ENCODE measurements at regions of chr15 and their contacts with region 1.

Region 1: DNA sequence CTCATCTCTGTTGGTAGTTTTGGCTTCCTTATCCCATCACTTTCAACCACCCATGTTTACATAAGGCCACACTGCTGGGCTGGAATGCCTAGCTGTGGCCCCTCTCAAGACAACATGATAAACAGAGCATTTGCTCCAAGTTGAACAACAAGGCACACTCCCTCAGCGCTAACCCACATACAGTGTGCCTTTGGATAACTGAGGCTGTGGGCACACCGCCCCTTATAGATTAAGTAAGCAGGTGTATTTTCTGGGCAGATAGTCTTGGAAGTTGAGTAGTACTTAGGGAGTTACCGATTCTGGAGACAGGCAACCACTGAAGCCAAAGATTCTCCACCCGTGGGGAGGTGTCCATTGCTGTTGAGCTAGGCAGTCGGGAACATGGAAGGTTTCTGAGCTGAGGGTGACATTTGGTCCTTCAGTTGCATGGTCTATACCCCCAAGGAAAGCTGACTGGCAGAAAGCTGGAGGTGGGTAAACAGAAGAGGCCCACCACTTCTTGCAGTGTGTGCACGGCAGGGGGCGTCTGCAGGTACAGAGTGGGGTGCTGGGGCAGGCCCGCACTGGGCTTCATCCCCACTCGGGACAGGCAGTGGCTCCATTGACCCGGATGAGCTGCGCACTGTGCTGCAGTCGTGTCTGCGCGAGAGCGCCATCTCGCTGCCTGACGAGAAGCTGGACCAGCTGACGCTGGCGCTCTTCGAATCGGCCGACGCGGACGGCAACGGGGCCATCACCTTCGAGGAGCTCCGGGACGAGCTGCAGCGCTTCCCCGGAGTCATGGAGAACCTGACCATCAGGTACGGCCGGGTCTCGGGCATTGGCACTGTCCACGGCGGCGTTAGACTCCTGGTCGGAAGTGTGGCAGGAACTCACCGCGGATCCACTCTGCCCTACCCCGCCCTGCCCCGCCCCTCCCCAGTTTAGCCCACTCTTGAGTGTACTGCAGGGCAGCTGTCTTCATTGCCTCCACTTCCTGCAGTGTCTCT is 16.8 kb downstream of the NOX5 start:
- DNase-seq: peak; percentile 83
- H3K4me3 ChIP-seq: peak overlapping the region; percentile 35 to 44; a peak in 2 of 4 replicates
- H3K27ac ChIP-seq: no peak overlapping the region
- H3K4me1 ChIP-seq: no peaks in the 10 kb centered on the region; a peak in 1 of 4 replicates
- H3K27me3 ChIP-seq: no peaks in the 10 kb centered on the region
- CTCF ChIP-seq: peak; percentile 49
- EP300 ChIP-seq: no peak
- RAD21 ChIP-seq: peak; percentile 60

Region 2: GRCh38 chr15:68991723-68992122 is 39.6 kb before region 1 on chr15:
- CTCF ChIA-PET with region 1: interaction called, 10 read pairs
- POLR2A ChIA-PET with region 1: no interaction called
- DNase-seq: peak; percentile 55
- H3K4me3 ChIP-seq: no peak overlapping the region
- H3K27ac ChIP-seq: peak overlapping the region in 1 of 2 experiments; percentile 94; a peak in 2 of 4 replicates
- H3K4me1 ChIP-seq: peaks cover 0 to 27% of the 10 kb centered on the region in 2 experiments; a peak in 2 of 4 replicates
- H3K27me3 ChIP-seq: peaks cover 6% of the 10 kb centered on the region; the same call in 1 of the 2 replicates
- CTCF ChIP-seq: no peak
- EP300 ChIP-seq: peak in 1 of 2 experiments; percentile 82; a peak in 2 of 4 replicates
- RAD21 ChIP-seq: no peak

Region 3: DNA sequence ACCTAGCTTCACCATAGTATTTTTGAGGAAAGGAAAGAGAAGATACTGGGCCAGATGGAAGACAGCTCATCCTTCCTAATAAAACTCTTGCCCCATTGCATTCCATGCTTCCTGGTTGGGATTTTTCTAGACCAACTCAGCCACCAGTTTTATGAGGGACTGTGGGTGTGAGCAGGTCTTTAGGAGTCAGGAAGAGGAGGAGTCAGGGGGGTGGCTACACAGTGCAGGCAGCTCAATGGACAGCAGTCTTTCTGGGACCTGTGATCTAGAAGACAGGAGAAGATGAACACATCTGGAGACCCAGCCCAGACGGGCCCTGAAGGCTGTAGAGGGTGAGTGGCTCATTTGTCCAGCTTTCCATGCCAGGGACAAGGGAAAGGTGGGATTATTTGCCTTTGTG is 16.9 kb before region 1 on chr15 and contains the start of gene NOX5:
- CTCF ChIA-PET with region 1: interaction called, 12 read pairs
- POLR2A ChIA-PET with region 1: no interaction called
- DNase-seq: no peak
- H3K4me3 ChIP-seq: no peak within 1 kb of the TSS
- H3K27ac ChIP-seq: peak within 1 kb of the TSS in 1 of 2 experiments; percentile 51; a peak in 1 of 4 replicates
- H3K4me1 ChIP-seq: peaks cover 0 to 15% of the 10 kb centered on the region in 2 experiments; a peak in 2 of 4 replicates
- H3K27me3 ChIP-seq: peaks cover 6% of the 10 kb centered on the region; the same call in 1 of the 2 replicates
- CTCF ChIP-seq: no peak
- EP300 ChIP-seq: no peak
- RAD21 ChIP-seq: no peak
- polyA plus RNA-seq, gene NOX5: 0.02 and 0.05 TPM in 2 replicates

Region 4: GRCh38 chr15:69045808-69046207 is 14.5 kb after region 1 on chr15:
- CTCF ChIA-PET with region 1: interaction called, 15 read pairs
- POLR2A ChIA-PET with region 1: no interaction called
- DNase-seq: no peak
- H3K4me3 ChIP-seq: no peak overlapping the region
- H3K27ac ChIP-seq: peak overlapping the region in 1 of 2 experiments; percentile 58; a peak in 2 of 4 replicates
- H3K4me1 ChIP-seq: peaks cover 6 to 9% of the 10 kb centered on the region in 2 experiments; a peak in 3 of 4 replicates
- H3K27me3 ChIP-seq: no peaks in the 10 kb centered on the region
- CTCF ChIP-seq: no peak
- EP300 ChIP-seq: no peak
- RAD21 ChIP-seq: no peak

Region 5: DNA sequence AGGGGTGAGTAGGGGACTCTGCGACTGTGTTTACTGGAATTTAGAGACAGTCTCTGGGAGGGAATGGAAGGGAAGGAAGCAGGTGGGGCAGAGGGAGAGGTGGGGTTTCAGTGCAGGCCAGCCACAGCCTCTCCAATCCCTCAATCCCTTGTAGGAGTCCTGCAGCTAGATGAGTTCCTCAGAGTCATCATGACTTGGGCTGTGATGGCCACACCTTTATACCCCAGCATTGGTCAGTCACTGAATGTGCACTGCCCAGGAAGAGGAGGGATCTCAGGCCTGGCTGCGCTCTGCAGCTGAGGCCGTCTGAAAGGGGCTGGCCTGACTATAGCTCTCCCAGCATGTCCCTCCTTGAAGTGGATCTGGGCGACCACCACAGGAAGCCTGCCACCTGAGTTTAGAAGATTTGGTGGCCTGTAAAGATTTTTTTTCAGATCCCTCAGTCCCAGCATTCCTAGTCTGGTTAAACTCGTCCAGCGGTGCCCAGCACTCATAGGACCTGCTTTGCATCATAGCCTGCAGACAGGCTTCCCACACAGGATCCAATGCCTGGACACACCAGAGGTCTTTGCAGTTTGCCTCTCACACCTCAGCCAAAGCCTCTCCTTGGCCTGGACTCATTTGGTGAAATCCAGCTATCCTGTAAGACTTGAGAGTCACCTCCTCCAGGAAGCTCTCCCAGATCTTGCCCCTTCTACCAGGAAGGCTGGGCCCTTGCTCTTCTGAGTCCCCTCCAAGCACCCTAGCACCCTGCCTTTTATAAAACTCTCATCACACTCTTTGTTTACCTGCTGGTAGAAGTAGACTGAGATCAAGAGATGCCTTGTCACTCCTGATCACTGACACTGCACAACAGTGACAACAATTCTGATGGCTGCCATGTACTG is 62.1 kb after region 1 on chr15:
- CTCF ChIA-PET with region 1: no interaction called
- POLR2A ChIA-PET with region 1: no interaction called
- DNase-seq: no peak
- H3K4me3 ChIP-seq: no peak overlapping the region
- H3K27ac ChIP-seq: no peak overlapping the region
- H3K4me1 ChIP-seq: peaks cover 13 to 25% of the 10 kb centered on the region in 2 experiments; a peak in 3 of 4 replicates
- H3K27me3 ChIP-seq: no peaks in the 10 kb centered on the region
- CTCF ChIP-seq: no peak
- EP300 ChIP-seq: no peak
- RAD21 ChIP-seq: no peak

Region 6: DNA sequence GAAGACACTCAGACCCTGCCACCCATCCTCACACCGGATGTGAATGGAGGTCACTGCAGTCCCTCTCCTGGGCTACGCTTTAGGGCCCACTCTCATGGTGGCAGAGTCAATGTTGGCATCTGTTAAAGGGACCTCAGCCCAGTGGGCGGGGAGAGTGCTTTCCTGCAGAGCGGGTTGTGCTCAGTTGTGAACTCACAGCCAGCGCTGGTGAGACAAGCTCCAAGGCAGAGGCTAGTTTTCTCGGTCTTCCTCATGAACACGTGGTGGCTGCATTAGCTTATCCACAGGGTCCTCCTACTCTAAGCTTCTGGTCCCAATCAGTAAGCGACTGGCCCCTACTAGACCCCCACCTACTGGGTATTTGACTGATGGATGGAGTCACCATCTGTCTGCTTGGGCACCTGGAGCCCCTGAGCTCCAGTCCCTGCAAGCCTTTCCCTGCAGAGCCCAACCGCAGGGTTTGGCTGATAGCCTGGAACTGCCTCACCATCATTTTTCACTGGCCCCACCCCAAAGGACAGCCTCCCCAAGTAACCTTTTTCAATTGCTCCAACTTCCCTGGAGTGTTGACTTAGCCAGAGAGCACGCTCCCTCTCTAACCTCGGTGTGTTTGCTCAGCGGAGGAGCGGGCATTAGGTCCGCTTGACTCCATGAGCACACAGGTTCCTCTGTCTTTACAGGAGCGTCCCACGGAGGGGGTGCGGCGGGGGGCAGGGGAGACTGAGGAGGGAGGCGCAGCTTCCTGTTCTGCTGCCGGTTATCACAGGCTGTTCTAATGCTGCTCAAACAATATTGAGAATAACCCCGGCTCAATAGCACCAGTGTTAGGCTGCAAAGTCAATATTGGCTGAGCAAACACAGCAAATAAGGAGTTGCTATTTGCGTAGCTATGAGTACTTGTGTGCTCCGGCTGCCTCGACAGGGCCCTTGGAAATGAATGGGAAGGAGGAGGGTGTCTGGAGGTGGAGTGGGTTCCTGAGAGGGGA is 563.0 kb after region 1 on chr15:
- CTCF ChIA-PET with region 1: no interaction called
- POLR2A ChIA-PET with region 1: no interaction called
- DNase-seq: no peak
- H3K4me3 ChIP-seq: no peak overlapping the region
- H3K27ac ChIP-seq: no peak overlapping the region
- H3K4me1 ChIP-seq: no peaks in the 10 kb centered on the region; a peak in 1 of 4 replicates
- H3K27me3 ChIP-seq: peaks cover 23% of the 10 kb centered on the region; the same call in 1 of the 2 replicates
- CTCF ChIP-seq: no peak
- EP300 ChIP-seq: no peak
- RAD21 ChIP-seq: no peak